Left colon (tissue), 2 donors: ENCODE measurements at regions of chr9 and their contacts with region 1.

Region 1: GRCh38 chr9:26892251-26893029 is at the start of gene CAAP1:
- DNase-seq: peak; percentile 95 to 97
- ATAC-seq: peak; percentile 90
- total RNA-seq, gene CAAP1: 29.8 to 34.4 TPM

Region 2: GRCh38 chr9:26946753-26947727 is 54.6 kb after region 1 on chr9 and contains the start of gene PLAA:
- intact Hi-C with region 1: loop called in 1 of 2 experiments (anchors 5 kb)
- DNase-seq: peak; percentile 91 to 92
- ATAC-seq: peak; percentile 99
- total RNA-seq, gene PLAA: 26.8 to 28.8 TPM

Region 3: GRCh38 chr9:27247756-27248155 is 355.3 kb after region 1 on chr9:
- intact Hi-C with region 1: no loop called
- DNase-seq: peak; percentile 30 to 31
- ATAC-seq: peak; percentile 79